WTC11 (cell line): ENCODE measurements at regions of chr17 and their contacts with region 1.

Region 1: DNA sequence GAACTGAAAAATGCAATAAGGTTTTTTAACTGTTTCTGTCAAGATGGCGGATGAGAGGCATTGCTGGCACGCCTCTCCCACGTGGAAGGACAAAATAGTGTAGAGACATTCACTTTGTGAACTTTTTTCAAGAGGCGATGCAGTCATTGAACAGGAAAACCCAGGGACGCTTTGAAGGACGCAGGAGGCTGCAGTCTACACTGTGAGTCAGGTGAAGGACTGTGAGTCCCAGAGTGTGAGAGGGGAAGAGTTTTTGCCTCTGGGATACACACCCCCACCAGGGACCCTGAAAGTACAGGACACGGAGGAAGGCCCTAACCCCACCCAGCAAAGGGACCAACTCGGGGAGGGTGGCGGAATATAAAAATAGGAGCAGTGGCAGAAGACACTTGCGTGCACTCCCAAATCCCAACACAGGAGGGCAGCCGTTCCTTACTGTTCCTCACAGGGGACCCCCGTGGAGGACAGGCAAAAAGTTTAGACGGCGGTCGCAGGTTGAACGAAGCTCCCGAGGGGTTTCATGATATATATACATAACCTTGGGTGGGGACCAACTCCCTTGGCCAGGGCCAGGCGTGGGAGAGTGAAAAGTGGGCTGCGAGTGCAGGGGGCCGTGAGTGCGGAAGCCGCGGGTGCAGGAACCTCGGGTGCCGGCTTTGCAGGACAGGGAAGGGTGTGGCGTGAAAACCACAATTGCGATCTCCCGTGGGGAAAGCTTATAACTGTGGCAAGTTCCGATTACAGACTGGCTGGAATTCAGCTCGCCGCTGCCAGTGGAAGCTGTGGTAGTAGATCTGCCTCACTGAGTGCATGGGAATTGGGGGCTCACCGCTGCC is 82.0 kb upstream of the ALOX12 start:
- DNase-seq: peak; percentile 85
- ATAC-seq: peak; percentile 83
- H3K4me3 Mint-ChIP-seq: peak overlapping the region; percentile 46
- H3K27ac Mint-ChIP-seq: no peak overlapping the region
- H3K4me1 Mint-ChIP-seq: peaks cover 4% of the 10 kb centered on the region
- H3K27me3 Mint-ChIP-seq: peaks cover 55% of the 10 kb centered on the region
- CTCF ChIP-seq: peak; percentile 75

Region 2: GRCh38 chr17:6853764-6854442 is 59.9 kb before region 1 on chr17:
- CTCF ChIA-PET with region 1: interaction called, 10 read pairs
- POLR2A ChIA-PET with region 1: no interaction called
- DNase-seq: peak; percentile 64
- ATAC-seq: peak; percentile 97
- H3K4me3 Mint-ChIP-seq: peak overlapping the region; percentile 78
- H3K27ac Mint-ChIP-seq: peak overlapping the region; percentile 66
- H3K4me1 Mint-ChIP-seq: peaks cover 23% of the 10 kb centered on the region
- H3K27me3 Mint-ChIP-seq: peaks cover 14% of the 10 kb centered on the region
- CTCF ChIP-seq: peak; percentile 72

Region 3: GRCh38 chr17:6927290-6928126 is 13.7 kb after region 1 on chr17:
- CTCF ChIA-PET with region 1: interaction called, 11 read pairs
- POLR2A ChIA-PET with region 1: interaction called, 5 read pairs
- DNase-seq: no peak
- ATAC-seq: no peak
- H3K4me3 Mint-ChIP-seq: no peak overlapping the region
- H3K27ac Mint-ChIP-seq: no peak overlapping the region
- H3K4me1 Mint-ChIP-seq: no peaks in the 10 kb centered on the region
- H3K27me3 Mint-ChIP-seq: peaks cover 33% of the 10 kb centered on the region
- CTCF ChIP-seq: no peak

Region 4: DNA sequence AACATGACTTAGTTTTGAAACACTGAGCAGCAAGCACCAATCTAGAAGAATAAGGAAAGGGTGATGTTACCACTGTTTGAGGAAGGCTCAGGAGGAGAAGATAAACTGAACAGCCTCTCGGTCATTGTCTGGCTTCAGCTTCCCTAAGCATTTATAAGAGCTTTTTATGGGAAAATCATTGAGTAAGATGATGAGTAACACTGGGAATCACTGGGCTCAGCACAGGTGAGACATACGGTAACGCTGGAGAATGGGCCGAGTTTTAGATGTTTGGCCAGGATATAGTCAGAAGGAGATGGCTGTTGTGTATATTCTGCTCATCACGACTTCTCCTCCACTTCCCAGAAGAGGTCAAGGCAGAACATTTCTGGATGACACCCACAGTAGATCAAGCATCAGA is 39.9 kb after region 1 on chr17:
- CTCF ChIA-PET with region 1: interaction called, 3 read pairs
- POLR2A ChIA-PET with region 1: interaction called, 12 read pairs
- DNase-seq: no peak
- ATAC-seq: no peak
- H3K4me3 Mint-ChIP-seq: no peak overlapping the region
- H3K27ac Mint-ChIP-seq: no peak overlapping the region
- H3K4me1 Mint-ChIP-seq: no peaks in the 10 kb centered on the region
- H3K27me3 Mint-ChIP-seq: peaks cover 25% of the 10 kb centered on the region
- CTCF ChIP-seq: no peak

Region 5: DNA sequence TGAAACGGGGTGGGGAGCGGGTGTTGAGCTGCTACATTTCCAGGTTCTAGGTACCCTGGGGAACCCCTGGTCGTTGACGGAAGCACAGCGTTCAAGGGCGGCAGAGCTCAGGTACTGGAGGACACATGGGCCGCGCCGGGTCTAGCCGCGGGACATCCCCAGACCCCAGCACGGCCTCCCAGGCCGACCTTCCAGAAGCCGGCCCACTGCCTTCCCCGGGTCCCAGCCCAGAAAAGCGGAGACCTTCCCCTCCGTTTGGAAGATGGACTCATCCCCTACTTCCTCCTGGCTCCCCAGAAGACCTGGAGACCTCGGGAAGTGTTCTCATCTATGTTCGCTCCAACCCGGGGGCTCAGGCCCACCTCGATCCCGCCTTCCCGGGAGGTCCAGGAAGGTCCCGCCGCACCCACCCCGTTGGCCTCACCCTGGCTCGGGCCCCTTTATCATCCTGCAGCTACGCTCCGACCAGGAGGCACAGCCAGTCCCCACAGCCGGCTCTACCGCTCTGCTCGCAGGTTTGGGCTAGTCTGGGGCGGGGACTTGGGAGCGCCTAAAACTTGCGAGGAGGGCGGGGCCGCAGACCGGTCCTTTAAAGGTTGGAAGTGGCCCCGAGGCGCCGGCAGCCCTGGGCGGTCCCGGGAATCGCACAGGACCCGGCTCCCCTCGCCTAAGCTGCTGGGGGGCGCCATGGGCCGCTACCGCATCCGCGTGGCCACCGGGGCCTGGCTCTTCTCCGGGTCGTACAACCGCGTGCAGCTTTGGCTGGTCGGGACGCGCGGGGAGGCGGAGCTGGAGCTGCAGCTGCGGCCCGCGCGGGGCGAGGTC is 81.8 kb after region 1 on chr17 and contains the start of gene ALOX12:
- CTCF ChIA-PET with region 1: interaction called, 24 read pairs
- POLR2A ChIA-PET with region 1: interaction called, 3 read pairs
- DNase-seq: peak; percentile 77
- ATAC-seq: peak; percentile 78
- H3K4me3 Mint-ChIP-seq: peak within 1 kb of the TSS; percentile 77
- H3K27ac Mint-ChIP-seq: no peak within 1 kb of the TSS
- H3K4me1 Mint-ChIP-seq: peaks cover 8% of the 10 kb centered on the region
- H3K27me3 Mint-ChIP-seq: peaks cover 55% of the 10 kb centered on the region
- CTCF ChIP-seq: no peak
- total RNA-seq, gene ALOX12: 1.6 to 1.9 TPM (median 1.9 TPM) in 3 replicates

Region 6: DNA sequence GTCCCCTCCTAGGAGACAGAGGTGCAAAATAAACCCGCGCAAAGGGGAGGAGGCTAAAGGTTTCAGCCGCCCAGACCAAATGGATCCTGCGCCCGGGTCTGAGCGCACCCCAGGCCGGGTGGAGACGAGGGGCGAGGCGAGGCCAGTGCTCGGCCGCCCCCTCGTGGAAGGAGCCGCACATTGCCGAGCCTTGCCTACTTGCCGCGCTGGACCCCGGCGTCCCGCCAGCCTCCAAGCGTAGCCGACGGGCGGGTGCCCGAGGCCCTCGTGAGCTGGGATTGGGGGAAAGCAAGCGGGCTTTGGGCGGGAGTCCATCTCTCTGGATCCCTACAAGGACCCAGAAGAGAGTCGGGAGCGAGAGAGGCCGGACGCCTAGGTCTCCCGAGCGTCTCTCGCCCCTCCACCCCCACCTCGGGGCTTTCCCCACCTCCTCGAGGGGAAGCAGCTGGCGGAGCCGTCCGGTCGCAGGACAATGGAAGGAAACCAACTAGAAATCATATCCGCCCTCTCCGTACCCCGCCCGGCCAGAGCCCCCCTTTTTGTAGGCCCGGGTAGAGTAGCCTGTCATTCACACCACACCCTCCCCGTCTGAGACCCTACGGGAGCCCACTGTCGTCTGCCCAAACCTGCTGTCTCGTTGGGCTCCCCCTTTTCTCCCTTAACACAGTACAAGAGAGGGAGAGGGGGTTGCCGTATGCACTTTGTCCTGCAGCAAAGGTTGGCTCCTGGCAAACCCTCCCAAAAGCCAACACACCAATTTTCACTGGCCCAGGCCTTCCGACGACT is 108.4 kb after region 1 on chr17:
- CTCF ChIA-PET with region 1: interaction called, 19 read pairs
- POLR2A ChIA-PET with region 1: no interaction called
- DNase-seq: peak; percentile 90
- ATAC-seq: peak; percentile 63
- H3K4me3 Mint-ChIP-seq: peak overlapping the region; percentile 91
- H3K27ac Mint-ChIP-seq: peak overlapping the region; percentile 93
- H3K4me1 Mint-ChIP-seq: peaks cover 51% of the 10 kb centered on the region
- H3K27me3 Mint-ChIP-seq: peaks cover 44% of the 10 kb centered on the region
- CTCF ChIP-seq: peak; percentile 88